CD8-positive, alpha-beta T cell (primary cell): ENCODE measurements at regions of chr5 and their contacts with region 1.

Region 1: DNA sequence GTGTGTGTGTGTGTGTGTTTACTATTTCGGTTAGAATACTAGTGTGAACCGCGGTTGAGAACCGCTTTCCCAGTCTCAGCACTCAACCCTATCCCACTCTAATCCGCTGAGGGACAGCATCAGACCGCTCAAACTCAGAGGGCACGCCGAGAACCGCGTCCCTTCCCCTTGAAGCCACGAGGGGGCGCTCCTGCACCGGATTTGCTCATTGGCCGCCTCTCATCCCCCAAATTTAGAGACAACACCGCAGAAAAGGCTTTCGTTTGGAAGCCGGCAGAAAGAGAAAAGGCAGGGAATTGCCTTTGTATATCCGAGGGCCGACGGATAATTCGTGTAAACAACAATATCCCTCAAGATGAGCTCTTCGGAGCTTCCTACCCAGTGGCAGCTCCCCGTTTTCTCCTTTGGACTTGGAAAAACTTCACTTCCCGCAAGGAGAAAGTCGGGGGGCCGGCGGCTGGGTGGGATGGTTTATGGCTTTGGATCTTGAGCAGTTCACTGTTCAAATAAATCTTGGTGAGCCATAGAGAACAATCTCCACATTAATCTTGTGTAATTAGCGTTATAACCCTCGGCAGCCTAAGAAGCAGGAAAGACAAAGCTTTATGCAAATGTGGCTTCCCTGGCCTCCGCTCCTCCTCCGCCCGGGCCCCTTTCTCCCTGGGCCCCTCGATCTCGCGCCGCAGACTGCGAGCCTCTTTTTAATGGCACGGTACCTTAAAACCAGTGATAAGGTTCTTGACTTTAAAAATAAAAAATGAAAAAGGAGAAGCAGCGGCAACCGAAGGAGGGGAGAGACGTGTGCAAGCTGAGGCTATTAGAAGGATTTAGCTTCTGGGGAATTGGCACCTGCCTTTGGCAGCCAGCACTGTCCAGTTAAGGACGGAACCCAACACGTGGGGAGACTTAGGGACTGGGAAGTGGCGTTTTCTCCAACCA is 296.8 kb downstream of the PARP8 start:
- DNase-seq: peak; percentile 22 to 73 (median 57)
- ATAC-seq: peak; percentile 70
- H3K4me3 ChIP-seq: peak overlapping the region; percentile 49 to 55
- H3K4me3 Mint-ChIP-seq: peak overlapping the region; percentile 83
- H3K27ac ChIP-seq: no peak overlapping the region
- H3K27ac Mint-ChIP-seq: no peak overlapping the region
- H3K4me1 ChIP-seq: peaks cover 24% of the 10 kb centered on the region
- H3K4me1 Mint-ChIP-seq: peaks cover 40% of the 10 kb centered on the region
- H3K27me3 ChIP-seq: peaks cover 30 to 40% of the 10 kb centered on the region in 2 experiments
- H3K27me3 Mint-ChIP-seq: peaks cover 64% of the 10 kb centered on the region
- CTCF ChIP-seq: peak; percentile 73

Region 2: GRCh38 chr5:51997949-51998348 is 1034.7 kb after region 1 on chr5:
- CTCF ChIA-PET with region 1: no interaction called
- POLR2A ChIA-PET with region 1: no interaction called
- intact Hi-C with region 1: no loop called
- DNase-seq: no peak
- ATAC-seq: no peak
- H3K4me3 ChIP-seq: no peak overlapping the region
- H3K4me3 Mint-ChIP-seq: no peak overlapping the region
- H3K27ac ChIP-seq: no peak overlapping the region
- H3K27ac Mint-ChIP-seq: no peak overlapping the region
- H3K4me1 ChIP-seq: no peaks in the 10 kb centered on the region
- H3K4me1 Mint-ChIP-seq: no peaks in the 10 kb centered on the region
- H3K27me3 ChIP-seq: no peaks in the 10 kb centered on the region
- H3K27me3 Mint-ChIP-seq: no peaks in the 10 kb centered on the region
- CTCF ChIP-seq: no peak

Region 3: DNA sequence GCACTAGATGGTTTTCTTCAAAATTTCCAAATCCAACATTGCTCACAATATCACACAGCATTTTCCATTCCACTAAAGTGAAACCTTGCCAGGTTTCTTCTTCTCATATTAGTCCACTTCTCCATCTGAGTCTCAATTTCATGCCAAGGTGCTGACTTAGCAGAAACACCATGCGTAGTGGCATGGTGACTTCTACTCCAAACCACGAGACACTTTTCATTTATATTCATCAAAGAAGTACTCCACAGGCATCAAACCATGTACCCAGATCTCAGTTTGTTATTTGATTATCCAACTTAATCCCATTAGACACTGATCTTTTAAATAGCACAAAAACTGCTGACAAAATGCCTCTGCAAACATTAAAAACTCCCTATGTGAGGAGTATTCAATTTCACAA is 1591.1 kb after region 1 on chr5:
- CTCF ChIA-PET with region 1: no interaction called
- POLR2A ChIA-PET with region 1: no interaction called
- intact Hi-C with region 1: loop called in 1 of 2 experiments (anchors 10 kb)
- DNase-seq: no peak
- ATAC-seq: no peak
- H3K4me3 ChIP-seq: no peak overlapping the region
- H3K4me3 Mint-ChIP-seq: no peak overlapping the region
- H3K27ac ChIP-seq: no peak overlapping the region
- H3K27ac Mint-ChIP-seq: no peak overlapping the region
- H3K4me1 ChIP-seq: no peaks in the 10 kb centered on the region
- H3K4me1 Mint-ChIP-seq: no peaks in the 10 kb centered on the region
- H3K27me3 ChIP-seq: peaks cover 0 to 3% of the 10 kb centered on the region in 2 experiments
- H3K27me3 Mint-ChIP-seq: peaks cover 4% of the 10 kb centered on the region
- CTCF ChIP-seq: no peak

Region 4: GRCh38 chr5:52657247-52657645 is 1694.0 kb after region 1 on chr5:
- CTCF ChIA-PET with region 1: interaction called, 22 read pairs
- POLR2A ChIA-PET with region 1: no interaction called
- intact Hi-C with region 1: loop called (anchors 1 to 2 kb)
- DNase-seq: peak in 2 of 9 experiments; percentile 46 to 64
- ATAC-seq: no peak
- H3K4me3 ChIP-seq: no peak overlapping the region
- H3K4me3 Mint-ChIP-seq: no peak overlapping the region
- H3K27ac ChIP-seq: no peak overlapping the region
- H3K27ac Mint-ChIP-seq: no peak overlapping the region
- H3K4me1 ChIP-seq: peaks cover 3% of the 10 kb centered on the region
- H3K4me1 Mint-ChIP-seq: peaks cover 4% of the 10 kb centered on the region
- H3K27me3 ChIP-seq: no peaks in the 10 kb centered on the region
- H3K27me3 Mint-ChIP-seq: peaks cover 8% of the 10 kb centered on the region
- CTCF ChIP-seq: peak; percentile 73

Region 5: DNA sequence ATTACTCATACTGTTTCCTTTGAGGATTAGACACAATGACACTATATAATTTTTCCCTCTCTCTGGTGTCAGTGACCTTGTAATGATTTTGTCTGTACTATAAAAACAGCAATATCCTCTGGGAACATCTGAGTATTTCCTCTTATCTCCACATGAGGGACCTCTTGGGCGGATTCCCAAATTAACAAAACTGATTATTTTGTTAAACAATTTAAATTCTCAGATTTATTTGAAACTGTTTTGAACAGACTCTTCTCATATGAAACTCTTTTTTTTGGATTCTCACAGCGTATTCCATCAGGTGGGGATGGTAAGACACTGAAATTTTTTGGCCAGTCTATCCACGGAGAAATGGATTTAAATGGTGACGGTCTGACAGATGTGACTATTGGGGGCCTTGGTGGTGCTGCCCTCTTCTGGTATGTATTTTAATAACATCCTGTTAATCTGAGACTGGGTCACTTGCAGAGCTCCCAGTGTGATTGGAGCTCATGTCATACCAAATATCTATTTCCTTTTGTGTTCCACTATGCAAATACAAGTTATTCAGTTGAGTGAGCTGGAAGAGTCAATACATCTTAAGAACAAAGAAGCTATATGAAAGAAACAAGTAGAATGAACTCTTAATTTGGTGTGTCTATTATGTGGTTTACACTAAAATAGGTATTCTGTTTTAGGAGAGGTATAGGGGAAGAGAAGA is 1952.1 kb after region 1 on chr5:
- CTCF ChIA-PET with region 1: interaction called, 3 read pairs
- POLR2A ChIA-PET with region 1: no interaction called
- intact Hi-C with region 1: loop called in 1 of 2 experiments (anchors 5 kb)
- DNase-seq: peak; percentile 10 to 76 (median 45)
- ATAC-seq: peak; percentile 97
- H3K4me3 ChIP-seq: no peak overlapping the region
- H3K4me3 Mint-ChIP-seq: peak overlapping the region; percentile 50
- H3K27ac ChIP-seq: no peak overlapping the region
- H3K27ac Mint-ChIP-seq: no peak overlapping the region
- H3K4me1 ChIP-seq: no peaks in the 10 kb centered on the region
- H3K4me1 Mint-ChIP-seq: peaks cover 6% of the 10 kb centered on the region
- H3K27me3 ChIP-seq: no peaks in the 10 kb centered on the region
- H3K27me3 Mint-ChIP-seq: no peaks in the 10 kb centered on the region
- CTCF ChIP-seq: peak; percentile 88